Natural killer cell (primary cell): ENCODE measurements at regions of chr14 and their contacts with region 1.

Region 1: DNA sequence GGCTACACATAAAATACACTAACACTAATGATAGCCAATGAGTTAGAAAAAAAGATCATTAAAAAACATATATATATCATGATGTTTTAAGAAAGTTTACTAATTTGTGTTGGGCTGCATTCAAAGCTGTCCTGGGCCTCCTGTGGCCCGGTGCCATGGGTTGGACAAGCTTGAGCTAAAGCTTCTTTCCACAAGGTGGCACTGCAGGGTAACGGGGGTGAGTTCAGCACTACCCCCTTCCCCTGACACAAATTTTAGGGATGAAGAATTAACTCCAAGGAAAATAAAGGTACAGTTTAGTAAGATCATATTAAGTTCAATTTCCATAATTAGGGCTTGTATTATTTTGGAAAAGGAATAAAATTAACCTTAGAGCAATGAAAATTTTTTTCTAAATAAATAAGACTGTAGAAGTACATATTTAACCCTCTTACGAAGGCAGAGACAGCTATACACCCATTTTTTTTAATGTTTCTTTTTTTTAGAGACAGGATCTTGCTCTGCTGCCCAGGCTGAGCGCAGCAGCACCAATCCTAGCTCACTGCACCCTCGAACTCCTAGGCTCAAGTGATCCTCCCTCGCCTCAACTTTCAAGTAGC is 38.9 kb downstream of the PPP1R13B start:
- DNase-seq: peak; percentile 28 to 84
- ATAC-seq: peak; percentile 73 to 96 (median 80)
- H3K4me3 ChIP-seq: no peak overlapping the region
- H3K4me3 Mint-ChIP-seq: no peak overlapping the region
- H3K27ac ChIP-seq: no peak overlapping the region
- H3K27ac Mint-ChIP-seq: no peak overlapping the region
- H3K4me1 ChIP-seq: no peaks in the 10 kb centered on the region
- H3K4me1 Mint-ChIP-seq: peaks cover 10 to 14% of the 10 kb centered on the region in 2 donors
- H3K27me3 ChIP-seq: no peaks in the 10 kb centered on the region
- H3K27me3 Mint-ChIP-seq: no peaks in the 10 kb centered on the region
- CTCF ChIP-seq: peak; percentile 89

Region 2: GRCh38 chr14:103401223-103402214 is 407.0 kb before region 1 on chr14:
- intact Hi-C with region 1: no loop called
- DNase-seq: peak in 1 of 2 donors; percentile 30
- ATAC-seq: peak; percentile 61 to 77 (median 61)
- H3K4me3 ChIP-seq: no peak overlapping the region
- H3K4me3 Mint-ChIP-seq: peak overlapping the region; percentile 59
- H3K27ac ChIP-seq: no peak overlapping the region
- H3K27ac Mint-ChIP-seq: peak overlapping the region; percentile 61 to 76
- H3K4me1 ChIP-seq: peaks cover 13% of the 10 kb centered on the region
- H3K4me1 Mint-ChIP-seq: peaks cover 50 to 54% of the 10 kb centered on the region in 2 donors
- H3K27me3 ChIP-seq: no peaks in the 10 kb centered on the region
- H3K27me3 Mint-ChIP-seq: no peaks in the 10 kb centered on the region
- CTCF ChIP-seq: no peak

Region 3: DNA sequence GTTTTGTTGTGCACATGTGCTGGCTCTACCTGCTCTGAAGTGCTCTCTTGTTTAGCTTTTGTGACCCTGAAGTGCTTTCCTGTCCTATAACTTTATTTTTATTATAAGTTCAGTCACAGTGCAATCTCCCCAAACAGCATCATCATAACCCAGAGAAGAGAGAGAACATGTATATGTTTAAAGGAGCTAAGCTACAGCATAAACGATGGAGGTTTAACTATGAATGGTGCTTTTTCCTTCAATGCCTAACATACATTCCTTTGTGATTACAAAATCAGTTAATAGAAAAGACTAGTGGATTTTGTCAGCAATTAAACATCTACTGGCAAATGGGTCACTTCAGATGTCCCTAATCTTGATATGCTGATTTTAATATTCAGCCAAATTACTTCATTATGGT is 46.5 kb before region 1 on chr14:
- intact Hi-C with region 1: no loop called
- DNase-seq: no peak
- ATAC-seq: no peak
- H3K4me3 ChIP-seq: no peak overlapping the region
- H3K4me3 Mint-ChIP-seq: no peak overlapping the region
- H3K27ac ChIP-seq: no peak overlapping the region
- H3K27ac Mint-ChIP-seq: no peak overlapping the region
- H3K4me1 ChIP-seq: no peaks in the 10 kb centered on the region
- H3K4me1 Mint-ChIP-seq: peaks cover 0 to 5% of the 10 kb centered on the region in 2 donors
- H3K27me3 ChIP-seq: no peaks in the 10 kb centered on the region
- H3K27me3 Mint-ChIP-seq: no peaks in the 10 kb centered on the region
- CTCF ChIP-seq: no peak

Region 4: DNA sequence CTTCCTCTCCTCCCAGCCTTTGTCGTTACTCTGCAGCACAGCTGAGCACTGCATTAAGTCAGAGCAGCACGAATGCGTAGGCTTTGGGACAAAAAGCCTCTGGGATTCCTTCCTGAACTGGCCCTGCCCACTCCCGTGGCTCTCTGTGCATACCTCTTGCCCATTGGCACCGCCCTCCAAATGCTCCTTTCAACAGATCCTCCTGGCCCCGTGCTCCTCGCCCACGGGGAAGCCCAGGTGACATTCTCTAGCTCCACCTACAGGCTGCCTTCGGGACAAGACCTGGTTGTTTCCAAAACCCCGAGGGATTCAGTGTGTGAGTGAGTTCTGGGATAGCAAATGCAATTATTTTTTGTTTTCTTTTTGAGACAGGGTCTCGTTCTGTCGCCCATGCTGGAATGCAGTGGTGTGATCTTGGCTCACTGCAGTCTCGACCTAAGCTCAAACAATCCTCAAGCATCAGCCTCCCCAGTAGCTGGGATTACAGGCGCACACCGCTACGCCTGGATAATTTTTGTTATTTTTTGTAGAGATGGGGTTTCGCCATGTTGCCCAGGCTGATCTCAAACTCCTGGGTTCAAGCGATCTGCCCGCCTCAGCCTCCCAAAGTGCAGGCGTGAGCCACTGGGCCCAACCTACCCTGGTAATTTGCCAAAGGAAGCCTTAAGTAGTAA is 101.9 kb after region 1 on chr14:
- intact Hi-C with region 1: loop called (anchors 1 kb)
- DNase-seq: peak; percentile 50 to 86
- ATAC-seq: peak; percentile 69 to 84 (median 79)
- H3K4me3 ChIP-seq: peak overlapping the region; percentile 27
- H3K4me3 Mint-ChIP-seq: peak overlapping the region; percentile 83
- H3K27ac ChIP-seq: no peak overlapping the region
- H3K27ac Mint-ChIP-seq: peak overlapping the region; percentile 56 to 86
- H3K4me1 ChIP-seq: peaks cover 24% of the 10 kb centered on the region
- H3K4me1 Mint-ChIP-seq: peaks cover 19 to 32% of the 10 kb centered on the region in 2 donors
- H3K27me3 ChIP-seq: no peaks in the 10 kb centered on the region
- H3K27me3 Mint-ChIP-seq: no peaks in the 10 kb centered on the region
- CTCF ChIP-seq: peak; percentile 90

Region 5: DNA sequence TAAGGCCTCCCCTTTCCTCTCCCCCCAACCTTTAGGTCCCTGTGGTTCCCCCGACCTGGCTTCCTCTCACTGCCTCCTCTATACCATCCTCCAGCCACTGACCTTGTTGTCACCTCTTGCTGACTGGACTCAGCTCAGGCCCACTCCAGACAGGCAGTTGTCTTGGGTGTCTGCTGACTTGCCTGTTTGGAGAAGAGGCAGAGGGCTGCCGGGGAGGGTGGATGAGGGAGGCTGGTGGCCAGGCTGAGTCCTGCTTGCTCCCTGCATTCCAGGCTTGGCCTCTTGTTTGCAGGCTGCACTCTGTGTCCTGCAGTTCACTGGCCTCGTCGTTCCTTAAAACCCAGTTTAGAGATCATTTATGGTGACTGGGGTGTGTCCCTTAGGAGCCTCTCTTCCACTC is 164.9 kb after region 1 on chr14:
- intact Hi-C with region 1: loop called (anchors 5 kb)
- DNase-seq: no peak
- ATAC-seq: no peak
- H3K4me3 ChIP-seq: no peak overlapping the region
- H3K4me3 Mint-ChIP-seq: no peak overlapping the region
- H3K27ac ChIP-seq: no peak overlapping the region
- H3K27ac Mint-ChIP-seq: no peak overlapping the region
- H3K4me1 ChIP-seq: no peaks in the 10 kb centered on the region
- H3K4me1 Mint-ChIP-seq: peaks cover 0 to 10% of the 10 kb centered on the region in 2 donors
- H3K27me3 ChIP-seq: no peaks in the 10 kb centered on the region
- H3K27me3 Mint-ChIP-seq: peaks cover 3 to 6% of the 10 kb centered on the region in 2 donors
- CTCF ChIP-seq: no peak

Region 6: DNA sequence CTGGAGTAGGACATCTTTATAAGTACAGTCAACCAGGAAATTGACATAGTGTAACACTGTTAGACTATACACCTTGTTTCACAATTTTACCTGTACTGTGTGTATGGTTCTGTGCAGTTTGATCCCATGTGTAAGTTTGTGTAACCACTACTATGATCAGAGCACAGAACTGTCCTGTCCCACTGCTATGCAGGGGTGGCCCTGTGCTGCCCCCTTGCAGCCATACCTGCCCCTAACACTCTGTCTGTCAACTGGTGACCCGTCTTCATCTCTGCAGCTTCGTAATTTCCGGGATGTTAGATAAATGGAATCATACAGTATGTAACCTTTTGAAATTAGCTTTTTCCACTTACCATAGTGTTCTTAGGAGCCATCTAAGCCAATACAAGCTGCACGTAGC is 192.5 kb after region 1 on chr14:
- intact Hi-C with region 1: loop called (anchors 1 kb)
- DNase-seq: peak; percentile 16 to 33
- ATAC-seq: peak; percentile 53 to 78 (median 55)
- H3K4me3 ChIP-seq: no peak overlapping the region
- H3K4me3 Mint-ChIP-seq: no peak overlapping the region
- H3K27ac ChIP-seq: no peak overlapping the region
- H3K27ac Mint-ChIP-seq: no peak overlapping the region
- H3K4me1 ChIP-seq: no peaks in the 10 kb centered on the region
- H3K4me1 Mint-ChIP-seq: no peaks in the 10 kb centered on the region
- H3K27me3 ChIP-seq: no peaks in the 10 kb centered on the region
- H3K27me3 Mint-ChIP-seq: peaks cover 0 to 7% of the 10 kb centered on the region in 2 donors
- CTCF ChIP-seq: peak; percentile 30